ENCODE measurements at regions of chr20 and their contacts with region 1.

Region 1: GRCh38 chr20:57089691-57090150 is 176.7 kb downstream of the BMP7 start:
- DNase-seq: peak; percentile 75
- H3K4me3 ChIP-seq: no peak overlapping the region
- H3K27ac ChIP-seq: no peak overlapping the region
- H3K4me1 ChIP-seq: peaks cover 3% of the 10 kb centered on the region
- H3K27me3 ChIP-seq: no peaks in the 10 kb centered on the region
- CTCF ChIP-seq: peak; percentile 76 to 91 (median 82)
- POLR2A ChIP-seq: no peak

Region 2: DNA sequence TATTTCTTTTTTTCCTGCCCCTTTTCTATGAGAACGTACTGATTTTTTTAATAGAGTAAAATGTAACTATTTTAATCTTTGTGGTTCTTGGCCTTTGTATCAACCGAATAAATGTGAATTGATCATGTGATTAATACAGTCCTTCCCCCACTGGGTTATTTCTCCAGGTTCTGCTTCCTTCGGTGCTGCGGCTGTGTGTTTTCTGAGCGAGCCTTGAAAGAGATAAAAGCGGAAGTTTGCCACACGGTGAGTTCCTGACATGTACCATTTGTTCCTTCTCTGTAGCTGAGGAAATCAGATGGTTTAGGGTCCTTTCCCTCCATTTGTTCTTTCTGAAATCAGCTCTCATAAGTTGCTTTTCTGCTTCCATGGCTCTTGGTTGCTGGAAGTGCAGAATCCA is 605.8 kb before region 1 on chr20:
- intact Hi-C with region 1: no loop called
- DNase-seq: peak; percentile 48
- H3K4me3 ChIP-seq: no peak overlapping the region
- H3K27ac ChIP-seq: peak overlapping the region; percentile 35 to 60
- H3K4me1 ChIP-seq: no peaks in the 10 kb centered on the region
- H3K27me3 ChIP-seq: no peaks in the 10 kb centered on the region
- CTCF ChIP-seq: no peak
- POLR2A ChIP-seq: no peak

Region 3: DNA sequence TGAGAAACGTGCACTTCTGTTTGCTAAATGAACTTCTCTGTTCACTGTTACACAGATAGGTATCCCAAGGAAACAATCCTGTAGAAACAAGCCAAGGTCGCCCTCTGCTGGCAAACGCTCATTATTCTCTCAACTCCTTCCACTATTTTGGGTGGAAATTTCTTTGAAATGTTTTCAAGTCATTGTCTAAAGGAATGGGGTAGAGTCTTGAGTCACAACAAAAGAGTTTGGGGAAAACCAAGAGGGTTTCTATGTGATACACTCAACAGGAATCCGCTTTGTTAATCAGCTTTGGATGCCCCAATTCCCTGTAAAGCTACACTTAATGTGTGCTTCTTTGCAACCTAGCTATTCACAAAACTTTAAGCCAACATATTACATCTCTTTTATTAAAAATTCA is 256.8 kb after region 1 on chr20:
- intact Hi-C with region 1: loop called (anchors 5 kb)
- DNase-seq: peak; percentile 91
- H3K4me3 ChIP-seq: no peak overlapping the region
- H3K27ac ChIP-seq: no peak overlapping the region
- H3K4me1 ChIP-seq: no peaks in the 10 kb centered on the region
- H3K27me3 ChIP-seq: no peaks in the 10 kb centered on the region
- CTCF ChIP-seq: peak; percentile 57 to 70 (median 69)
- POLR2A ChIP-seq: no peak

Measured in testis (tissue), 5 donors.